ENCODE measurements at regions of chr15 and their contacts with region 1.

Region 1: DNA sequence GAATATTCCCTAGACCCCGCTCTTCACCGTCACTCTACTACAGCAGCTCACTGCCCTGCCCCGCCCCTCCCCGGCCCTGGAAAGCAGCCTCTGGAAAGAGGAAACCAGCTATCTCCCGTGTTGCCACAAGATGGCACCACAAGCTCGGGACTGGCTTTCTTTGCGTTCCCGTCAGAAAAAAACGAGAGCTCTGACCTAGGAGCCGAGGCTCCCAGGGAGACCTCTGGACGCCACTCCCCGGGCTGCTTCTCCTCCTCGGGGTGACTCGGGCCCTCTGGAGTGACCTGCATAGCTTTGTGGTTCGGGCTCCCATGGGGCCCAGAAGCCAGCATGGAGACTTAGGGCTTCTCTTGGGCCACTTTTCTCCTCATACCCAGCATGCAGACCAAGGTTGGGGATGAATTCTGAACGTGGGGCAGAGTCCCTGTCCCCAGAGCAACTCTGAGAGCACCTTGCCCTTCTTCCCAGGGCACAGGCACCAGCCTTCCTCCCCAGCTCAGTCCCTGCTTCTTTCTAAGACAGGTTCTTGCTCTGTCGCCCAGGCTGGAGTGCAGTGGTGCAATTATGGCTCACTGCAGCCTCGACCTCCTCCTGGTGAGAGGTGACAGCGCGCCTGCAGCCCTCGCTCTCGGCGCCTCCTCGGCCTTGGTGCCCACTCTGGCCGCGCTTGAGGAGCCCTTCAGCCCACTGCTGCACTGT is 19.0 kb downstream of the STOML1 start:
- DNase-seq: peak; percentile 88
- ATAC-seq: peak; percentile 95

Region 2: DNA sequence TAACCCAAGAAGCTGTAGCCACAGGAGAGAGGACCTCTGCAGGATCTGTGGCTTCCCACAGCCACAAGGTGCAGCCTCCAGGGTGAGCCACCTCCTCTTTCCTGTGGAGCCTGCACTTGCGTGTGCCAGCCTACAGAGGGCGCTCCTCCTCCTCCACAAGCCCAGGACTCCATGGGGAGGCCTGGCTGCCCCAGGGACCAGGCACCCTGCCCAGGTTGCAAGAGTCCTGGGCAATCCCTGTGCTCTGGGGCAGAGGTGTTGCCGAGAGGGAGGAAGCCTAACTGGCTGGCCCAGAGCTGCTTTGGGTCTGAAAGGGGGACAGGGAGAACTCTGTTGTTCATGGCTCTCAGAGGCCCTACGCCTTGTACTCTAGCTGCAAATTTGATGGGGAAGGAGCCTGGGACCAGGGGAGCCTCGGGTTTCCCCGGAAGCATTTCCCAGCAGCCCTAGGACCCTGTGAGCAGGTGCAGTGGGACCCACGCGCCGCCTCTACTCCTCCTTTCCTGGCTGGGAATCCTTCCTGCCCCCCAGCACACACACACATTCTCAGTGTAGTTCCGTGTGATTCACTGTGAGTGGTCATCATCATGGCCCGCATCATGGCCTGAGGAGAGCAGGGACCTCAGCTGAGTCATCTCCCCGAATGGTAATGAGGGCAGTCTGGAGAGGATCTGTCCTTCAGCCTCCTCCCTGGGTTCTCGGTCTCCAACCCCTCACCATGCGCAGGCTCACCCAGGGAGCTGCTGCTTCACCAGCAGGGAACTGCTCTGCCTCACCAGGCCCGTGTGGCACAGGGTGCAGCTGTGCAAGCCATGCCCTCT is 75.5 kb before region 1 on chr15:
- intact Hi-C with region 1: no loop called
- DNase-seq: peak; percentile 82
- ATAC-seq: peak; percentile 96

Region 3: GRCh38 chr15:74025436-74025835 is 52.3 kb after region 1 on chr15:
- intact Hi-C with region 1: loop called (anchors 10 kb)
- DNase-seq: no peak
- ATAC-seq: peak; percentile 45

Measured in left ventricle myocardium superior (tissue), 1 donor.